H1 (cell line): ENCODE measurements at regions of chr1 and their contacts with region 1.

Region 1: DNA sequence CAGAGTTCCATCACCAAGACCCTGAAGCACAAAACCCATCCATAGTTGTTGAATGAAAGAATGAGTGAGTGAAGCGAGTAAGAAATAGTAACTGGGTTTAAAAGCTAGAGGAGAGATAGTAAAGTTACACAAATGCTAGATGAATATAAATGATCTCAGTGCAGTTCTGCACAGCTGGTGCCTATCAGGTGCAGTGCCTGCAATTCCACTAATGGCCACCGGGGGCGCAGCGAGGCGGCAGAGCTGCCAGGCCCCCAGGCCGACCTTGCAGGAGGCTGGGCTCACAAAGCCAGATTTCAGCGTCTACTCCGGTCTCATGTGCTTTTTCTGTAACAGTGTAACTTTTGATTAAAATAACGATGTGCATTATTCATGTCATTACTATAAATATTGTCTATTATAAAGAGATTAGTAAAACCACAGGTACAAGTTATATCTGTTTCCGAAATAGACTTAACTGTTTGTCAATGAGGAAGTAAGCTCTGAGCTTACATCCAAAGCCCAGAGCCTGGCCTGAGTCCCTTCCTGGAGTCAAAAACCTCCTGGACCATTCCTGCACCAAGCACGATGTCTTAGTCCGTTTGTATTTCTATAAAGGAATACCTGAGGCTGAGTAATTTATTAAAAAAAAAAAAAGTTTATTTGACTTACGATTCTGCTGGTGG is 477.6 kb downstream of the NPHP4 start:
- DNase-seq: peak; percentile 9 to 94
- H3K4me3 ChIP-seq: no peak overlapping the region
- H3K27ac ChIP-seq: no peak overlapping the region
- H3K4me1 ChIP-seq: 0 out of 7 replicates have a peak, but pooled peaks cover 0 to 2% (median 0%) of the 10 kb centered on the region in 4 experiments
- H3K27me3 ChIP-seq: no peaks in the 10 kb centered on the region
- CTCF ChIP-seq: peak; percentile 86 to 99 (median 97)
- EP300 ChIP-seq: no peak
- POLR2A ChIP-seq: no peak
- RAD21 ChIP-seq: peak; percentile 75 to 83

Region 2: DNA sequence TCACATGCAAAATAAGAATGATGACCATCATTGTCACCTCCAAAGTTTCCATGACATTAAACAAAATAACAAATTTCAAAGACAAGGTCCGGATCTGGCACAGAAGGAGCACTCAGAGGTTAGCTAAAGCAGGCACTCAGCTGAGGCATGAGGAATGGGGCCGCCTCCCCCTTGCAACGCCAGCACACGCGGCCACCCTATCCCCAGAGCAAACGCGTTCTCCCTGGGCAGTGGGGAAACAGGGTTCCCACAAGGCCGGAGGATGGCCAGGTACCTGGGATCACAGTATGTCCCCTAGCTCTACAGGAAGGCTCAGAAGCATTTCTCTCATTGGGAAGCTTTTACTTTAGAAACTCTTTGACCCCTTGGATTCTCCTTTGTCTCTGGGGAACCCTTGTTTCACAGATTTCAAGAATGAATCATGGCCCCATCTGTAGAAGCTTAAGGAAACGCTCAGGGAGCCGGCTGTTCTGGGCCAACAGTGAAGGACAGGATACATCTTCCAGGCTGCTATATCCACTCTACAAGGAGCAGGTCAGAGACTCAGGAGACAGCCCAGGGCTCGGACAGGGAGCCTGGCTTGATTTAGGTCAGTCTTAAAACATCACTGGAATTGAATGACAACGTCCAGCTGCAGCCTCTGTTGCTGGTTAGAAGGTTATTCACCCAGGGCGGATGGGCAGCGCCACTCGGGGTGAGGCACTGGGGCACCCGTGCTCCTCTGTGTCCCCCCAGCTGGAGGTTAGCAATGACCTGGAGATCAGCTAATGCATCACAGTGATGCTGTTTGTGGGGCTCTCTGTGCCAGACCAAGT is 18.8 kb before region 1 on chr1:
- CTCF ChIA-PET with region 1: interaction called, 21 read pairs
- POLR2A ChIA-PET with region 1: no interaction called
- DNase-seq: no peak
- H3K4me3 ChIP-seq: no peak overlapping the region
- H3K27ac ChIP-seq: no peak overlapping the region
- H3K4me1 ChIP-seq: no peaks in the 10 kb centered on the region
- H3K27me3 ChIP-seq: no peaks in the 10 kb centered on the region; a peak in 1 of 7 replicates
- CTCF ChIP-seq: no peak
- EP300 ChIP-seq: no peak
- POLR2A ChIP-seq: no peak
- RAD21 ChIP-seq: no peak

Region 3: GRCh38 chr1:5597991-5598823 is 83.6 kb after region 1 on chr1:
- CTCF ChIA-PET with region 1: interaction called, 25 read pairs
- POLR2A ChIA-PET with region 1: no interaction called
- DNase-seq: no peak
- H3K4me3 ChIP-seq: no peak overlapping the region
- H3K27ac ChIP-seq: no peak overlapping the region
- H3K4me1 ChIP-seq: peaks cover 0 to 3% (median 0%) of the 10 kb centered on the region in 4 experiments; a peak in 2 of 7 replicates
- H3K27me3 ChIP-seq: no peaks in the 10 kb centered on the region
- CTCF ChIP-seq: peak; percentile 32 to 44 (median 36)
- EP300 ChIP-seq: no peak
- POLR2A ChIP-seq: no peak
- RAD21 ChIP-seq: peak in 1 of 2 experiments; percentile 46; a peak in 3 of 4 replicates

Region 4: GRCh38 chr1:5628416-5628815 is 113.8 kb after region 1 on chr1:
- CTCF ChIA-PET with region 1: interaction called, 36 read pairs
- POLR2A ChIA-PET with region 1: no interaction called
- DNase-seq: no peak
- H3K4me3 ChIP-seq: no peak overlapping the region
- H3K27ac ChIP-seq: no peak overlapping the region
- H3K4me1 ChIP-seq: no peaks in the 10 kb centered on the region
- H3K27me3 ChIP-seq: no peaks in the 10 kb centered on the region; a peak in 1 of 7 replicates
- CTCF ChIP-seq: no peak
- EP300 ChIP-seq: no peak
- POLR2A ChIP-seq: no peak
- RAD21 ChIP-seq: no peak

Region 5: GRCh38 chr1:5830771-5831599 is 316.3 kb after region 1 on chr1:
- CTCF ChIA-PET with region 1: interaction called, 32 read pairs
- POLR2A ChIA-PET with region 1: no interaction called
- DNase-seq: peak; percentile 73 to 93
- H3K4me3 ChIP-seq: no peak overlapping the region
- H3K27ac ChIP-seq: no peak overlapping the region
- H3K4me1 ChIP-seq: peaks cover 10 to 20% (median 15%) of the 10 kb centered on the region in 4 experiments; a peak in 6 of 7 replicates
- H3K27me3 ChIP-seq: peaks cover 0 to 7% (median 0%) of the 10 kb centered on the region in 4 experiments; a peak in 2 of 7 replicates
- CTCF ChIP-seq: peak; percentile 96 to 99 (median 98)
- EP300 ChIP-seq: 0 out of 3 replicates have a peak, but pooled peaks of 1 of the 2 experiments have one; percentile 21
- POLR2A ChIP-seq: no peak
- RAD21 ChIP-seq: peak; percentile 100